CD8-positive, alpha-beta T cell (primary cell): ENCODE measurements at regions of chrX and their contacts with region 1.

Region 1: DNA sequence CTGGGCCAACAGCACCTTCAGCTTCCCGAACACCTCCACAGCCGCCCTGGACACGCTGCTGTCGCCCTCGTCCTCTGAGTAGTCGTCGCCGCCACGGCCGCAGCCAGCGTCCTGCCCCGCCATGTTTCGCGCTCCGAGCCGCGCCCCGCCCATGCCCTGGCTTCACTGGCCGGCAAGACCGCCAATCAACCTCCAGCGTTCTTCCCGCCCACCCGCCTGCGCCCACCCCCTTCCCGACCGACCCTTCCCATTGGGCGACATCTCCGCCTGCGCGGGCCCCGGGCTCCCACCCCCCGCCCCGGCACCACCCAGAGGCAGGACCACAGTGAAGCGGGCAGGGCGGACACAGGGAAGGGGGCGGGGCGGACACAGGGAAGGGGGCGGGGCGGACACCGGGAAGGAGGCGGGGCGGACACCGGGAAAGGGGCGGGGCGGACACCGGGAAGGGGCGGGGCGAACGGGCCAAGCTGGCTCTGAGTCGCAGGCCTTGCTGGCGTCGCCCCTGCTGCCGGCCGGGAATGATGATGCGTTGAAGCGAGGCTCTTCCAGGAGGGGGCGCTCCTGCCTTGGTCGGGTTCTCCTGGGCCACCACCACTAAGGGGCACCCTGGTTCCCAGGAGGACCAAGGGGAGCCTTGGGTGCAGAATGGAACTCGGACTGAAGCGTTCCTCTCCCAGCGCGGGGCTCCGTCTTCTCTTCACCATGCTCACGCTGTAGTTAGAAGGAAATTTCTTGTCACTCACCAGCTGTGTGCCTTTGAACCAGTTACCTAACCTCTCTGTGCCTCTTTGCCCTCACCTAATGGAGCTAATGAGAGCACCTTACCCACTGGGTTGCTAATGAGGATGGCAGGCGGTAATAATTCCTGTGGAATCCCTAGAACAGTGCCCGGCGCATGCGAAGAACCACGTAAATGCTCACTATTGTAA is at the start of gene HAUS7:
- DNase-seq: peak; percentile 73 to 94 (median 87)
- ATAC-seq: peak; percentile 84
- H3K4me3 ChIP-seq: peak within 1 kb of the TSS; percentile 65 to 83
- H3K4me3 Mint-ChIP-seq: peak within 1 kb of the TSS; percentile 84
- H3K27ac ChIP-seq: peak within 1 kb of the TSS; percentile 66 to 70
- H3K27ac Mint-ChIP-seq: peak within 1 kb of the TSS; percentile 77
- H3K4me1 ChIP-seq: peaks cover 18% of the 10 kb centered on the region
- H3K4me1 Mint-ChIP-seq: peaks cover 22% of the 10 kb centered on the region
- H3K27me3 ChIP-seq: no peaks in the 10 kb centered on the region
- H3K27me3 Mint-ChIP-seq: no peaks in the 10 kb centered on the region
- CTCF ChIP-seq: peak; percentile 32
- total RNA-seq, gene HAUS7: 20.5 to 20.6 TPM

Region 2: GRCh38 chrX:152958524-152959465 is 511.9 kb before region 1 on chrX:
- CTCF ChIA-PET with region 1: no interaction called
- POLR2A ChIA-PET with region 1: no interaction called
- intact Hi-C with region 1: loop called (anchors 1 kb)
- DNase-seq: peak; percentile 82 to 97 (median 90)
- ATAC-seq: peak; percentile 97
- H3K4me3 ChIP-seq: peak overlapping the region; percentile 29 to 34
- H3K4me3 Mint-ChIP-seq: peak overlapping the region; percentile 71
- H3K27ac ChIP-seq: peak overlapping the region; percentile 48 to 73
- H3K27ac Mint-ChIP-seq: peak overlapping the region; percentile 89
- H3K4me1 ChIP-seq: peaks cover 6% of the 10 kb centered on the region
- H3K4me1 Mint-ChIP-seq: peaks cover 5% of the 10 kb centered on the region
- H3K27me3 ChIP-seq: no peaks in the 10 kb centered on the region
- H3K27me3 Mint-ChIP-seq: no peaks in the 10 kb centered on the region
- CTCF ChIP-seq: peak; percentile 66

Region 3: GRCh38 chrX:153333768-153334645 is 136.7 kb before region 1 on chrX and contains the start of gene ZNF275:
- CTCF ChIA-PET with region 1: no interaction called
- POLR2A ChIA-PET with region 1: no interaction called
- intact Hi-C with region 1: loop called (anchors 1 to 2 kb)
- DNase-seq: peak; percentile 56 to 90 (median 78)
- ATAC-seq: peak; percentile 97
- H3K4me3 ChIP-seq: peak within 1 kb of the TSS; percentile 61 to 76
- H3K4me3 Mint-ChIP-seq: peak within 1 kb of the TSS; percentile 82
- H3K27ac ChIP-seq: peak within 1 kb of the TSS in 1 of 2 experiments; percentile 68
- H3K27ac Mint-ChIP-seq: peak within 1 kb of the TSS; percentile 79
- H3K4me1 ChIP-seq: peaks cover 40% of the 10 kb centered on the region
- H3K4me1 Mint-ChIP-seq: peaks cover 46% of the 10 kb centered on the region
- H3K27me3 ChIP-seq: no peaks in the 10 kb centered on the region
- H3K27me3 Mint-ChIP-seq: peaks cover under 1% of the 10 kb centered on the region
- CTCF ChIP-seq: no peak
- total RNA-seq, gene ZNF275: 11.3 to 11.6 TPM

Region 4: GRCh38 chrX:153599192-153600031 is 128.7 kb after region 1 on chrX:
- CTCF ChIA-PET with region 1: no interaction called
- POLR2A ChIA-PET with region 1: no interaction called
- intact Hi-C with region 1: loop called in 1 of 2 experiments (anchors 5 kb)
- DNase-seq: peak; percentile 62 to 92 (median 80)
- ATAC-seq: peak; percentile 84
- H3K4me3 ChIP-seq: peak overlapping the region; percentile 68 to 70
- H3K4me3 Mint-ChIP-seq: peak overlapping the region; percentile 84
- H3K27ac ChIP-seq: peak overlapping the region; percentile 37 to 56
- H3K27ac Mint-ChIP-seq: no peak overlapping the region
- H3K4me1 ChIP-seq: peaks cover 24% of the 10 kb centered on the region
- H3K4me1 Mint-ChIP-seq: peaks cover 47% of the 10 kb centered on the region
- H3K27me3 ChIP-seq: no peaks in the 10 kb centered on the region
- H3K27me3 Mint-ChIP-seq: no peaks in the 10 kb centered on the region
- CTCF ChIP-seq: no peak

Region 5: DNA sequence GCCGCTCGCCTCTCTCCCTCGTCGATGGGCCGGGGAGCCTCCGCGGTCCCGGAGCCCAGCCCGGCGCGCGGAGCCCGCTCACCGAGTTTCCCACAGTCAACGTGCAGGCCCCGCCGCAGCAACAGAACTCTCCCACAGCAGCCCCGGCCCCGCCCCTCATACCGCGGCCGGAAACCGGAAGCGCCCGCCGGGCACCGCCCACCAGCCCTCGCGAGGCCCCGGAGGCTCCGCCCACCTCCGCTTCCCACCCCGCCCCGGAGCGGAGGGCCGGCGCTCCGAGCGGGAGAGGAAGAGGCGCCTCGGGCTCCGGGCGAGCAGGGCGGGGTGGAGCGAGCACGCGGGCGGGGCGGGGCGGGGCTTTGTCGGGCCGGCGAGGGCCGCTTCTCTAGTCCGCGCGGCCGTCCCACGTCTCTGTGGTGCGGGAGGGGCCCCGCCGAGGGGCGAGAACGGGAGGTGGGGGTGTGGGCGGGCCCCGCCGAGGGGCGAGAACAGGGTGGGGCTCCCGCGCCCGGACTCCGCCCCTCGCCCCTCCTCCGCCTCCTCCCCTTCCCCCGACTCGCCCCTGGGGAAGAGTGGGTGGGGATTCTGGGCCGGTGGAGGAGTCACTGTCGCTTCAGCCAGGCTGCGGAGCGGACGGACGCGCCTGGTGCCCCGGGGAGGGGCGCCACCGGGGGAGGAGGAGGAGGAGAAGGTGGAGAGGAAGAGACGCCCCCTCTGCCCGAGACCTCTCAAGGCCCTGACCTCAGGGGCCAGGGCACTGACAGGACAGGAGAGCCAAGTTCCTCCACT is 253.7 kb after region 1 on chrX and contains the starts of genes ABCD1 and BCAP31:
- CTCF ChIA-PET with region 1: no interaction called
- POLR2A ChIA-PET with region 1: no interaction called
- intact Hi-C with region 1: loop called in 1 of 2 experiments (anchors 5 kb)
- DNase-seq: peak; percentile 78 to 92 (median 86)
- ATAC-seq: peak; percentile 78
- H3K4me3 ChIP-seq: peak within 1 kb of the TSS; percentile 59 to 63
- H3K4me3 Mint-ChIP-seq: peak within 1 kb of the TSS; percentile 84
- H3K27ac ChIP-seq: peak within 1 kb of the TSS; percentile 64 to 81
- H3K27ac Mint-ChIP-seq: peak within 1 kb of the TSS; percentile 83
- H3K4me1 ChIP-seq: peaks cover 31% of the 10 kb centered on the region
- H3K4me1 Mint-ChIP-seq: peaks cover 33% of the 10 kb centered on the region
- H3K27me3 ChIP-seq: no peaks in the 10 kb centered on the region
- H3K27me3 Mint-ChIP-seq: no peaks in the 10 kb centered on the region
- CTCF ChIP-seq: no peak
- total RNA-seq, gene ABCD1: 5.2 to 6.4 TPM
- total RNA-seq, gene BCAP31: 35.3 to 39.1 TPM